AG04450 (cell line): ENCODE measurements at regions of chr17 and their contacts with region 1.

Region 1: GRCh38 chr17:5592382-5592781 is 8.1 kb upstream of the NLRP1 start:
- DNase-seq: peak; percentile 6
- H3K4me3 ChIP-seq: no peak overlapping the region
- H3K27ac ChIP-seq: no peak overlapping the region
- H3K27me3 ChIP-seq: peaks cover 12% of the 10 kb centered on the region
- CTCF ChIP-seq: peak; percentile 60

Region 2: GRCh38 chr17:5526821-5527598 is 65.4 kb before region 1 on chr17:
- CTCF ChIA-PET with region 1: no interaction called
- POLR2A ChIA-PET with region 1: no interaction called
- DNase-seq: peak; percentile 91
- H3K4me3 ChIP-seq: no peak overlapping the region
- H3K27ac ChIP-seq: peak overlapping the region; percentile 81
- H3K27me3 ChIP-seq: no peaks in the 10 kb centered on the region
- CTCF ChIP-seq: no peak

Region 3: GRCh38 chr17:5706577-5707216 is 114.3 kb after region 1 on chr17:
- CTCF ChIA-PET with region 1: interaction called, 35 read pairs
- POLR2A ChIA-PET with region 1: no interaction called
- DNase-seq: peak; percentile 29
- H3K4me3 ChIP-seq: no peak overlapping the region
- H3K27ac ChIP-seq: no peak overlapping the region
- H3K27me3 ChIP-seq: peaks cover under 1% of the 10 kb centered on the region
- CTCF ChIP-seq: peak; percentile 90

Region 4: DNA sequence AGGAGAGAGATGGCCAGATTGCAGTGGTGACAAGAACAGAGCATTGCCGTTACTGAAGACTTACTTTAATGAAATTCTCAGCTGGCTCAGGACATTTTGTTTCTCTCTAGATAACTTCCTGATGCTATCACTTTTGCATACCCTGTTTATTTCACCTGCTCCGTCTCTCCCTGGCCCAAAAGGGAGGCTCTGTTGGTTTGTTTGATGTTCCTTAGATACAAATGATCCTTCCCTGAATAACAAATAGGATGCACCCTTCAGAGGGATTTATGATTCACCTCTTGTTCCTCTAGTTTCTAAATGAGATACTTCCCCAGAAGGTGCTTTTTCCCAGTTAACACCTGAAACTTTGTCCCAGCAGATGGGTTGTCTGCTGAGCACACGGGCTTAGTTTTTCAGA is 122.0 kb after region 1 on chr17:
- CTCF ChIA-PET with region 1: interaction called, 4 read pairs
- POLR2A ChIA-PET with region 1: interaction called, 10 read pairs
- DNase-seq: no peak
- H3K4me3 ChIP-seq: no peak overlapping the region
- H3K27ac ChIP-seq: no peak overlapping the region
- H3K27me3 ChIP-seq: peaks cover 19% of the 10 kb centered on the region
- CTCF ChIP-seq: no peak

Region 5: GRCh38 chr17:6421700-6422604 is 829.6 kb after region 1 on chr17:
- CTCF ChIA-PET with region 1: interaction called, 90 read pairs
- POLR2A ChIA-PET with region 1: no interaction called
- DNase-seq: peak; percentile 32
- H3K4me3 ChIP-seq: no peak overlapping the region
- H3K27ac ChIP-seq: no peak overlapping the region
- H3K27me3 ChIP-seq: peaks cover 12% of the 10 kb centered on the region
- CTCF ChIP-seq: peak; percentile 86

Region 6: DNA sequence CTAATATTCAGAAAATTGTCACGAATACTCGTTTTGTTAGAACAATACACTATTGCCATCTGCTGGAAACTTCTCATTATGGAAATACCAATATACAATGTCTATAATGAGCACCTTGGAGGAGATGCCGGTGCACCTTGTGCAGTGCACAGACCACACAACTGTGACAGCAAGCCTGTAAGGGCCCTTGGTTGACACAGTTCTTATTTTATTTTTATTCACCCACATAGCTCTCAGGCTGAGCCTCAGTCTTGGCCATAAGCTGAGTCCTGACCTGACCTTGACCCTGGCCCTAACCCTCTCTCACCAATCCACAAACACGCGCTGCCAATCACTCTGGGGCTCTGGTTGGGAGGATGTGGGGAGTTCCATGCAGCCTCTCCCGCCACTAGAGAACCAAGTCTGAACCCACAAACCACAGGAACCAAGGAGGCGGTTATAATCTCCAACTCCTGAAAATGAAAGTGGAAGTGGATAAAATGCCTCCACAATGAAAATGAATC is 834.9 kb after region 1 on chr17:
- CTCF ChIA-PET with region 1: interaction called, 90 read pairs
- POLR2A ChIA-PET with region 1: no interaction called
- DNase-seq: no peak
- H3K4me3 ChIP-seq: peak overlapping the region; percentile 20
- H3K27ac ChIP-seq: no peak overlapping the region
- H3K27me3 ChIP-seq: peaks cover 6% of the 10 kb centered on the region
- CTCF ChIP-seq: no peak

Region 7: GRCh38 chr17:6435968-6436367 is 843.6 kb after region 1 on chr17:
- CTCF ChIA-PET with region 1: interaction called, 22 read pairs
- POLR2A ChIA-PET with region 1: no interaction called
- DNase-seq: peak; percentile 34
- H3K4me3 ChIP-seq: no peak overlapping the region
- H3K27ac ChIP-seq: no peak overlapping the region
- H3K27me3 ChIP-seq: peaks cover 9% of the 10 kb centered on the region
- CTCF ChIP-seq: peak; percentile 84